Activated T-helper 1 cell treated with anti-CD3 and anti-CD28 coated beads, Interleukin-12 subunit alpha, Interleukin-12 subunit beta, Interleukin-2, Interleukin-4 antibody, amounts not matched to agents 30 ng/mL and 10 ng/mL and 1 ng/mL, durations not matched to agents 14 hours and 24 hours and 36 hours (primary cell): ENCODE measurements at regions of chr17 and their contacts with region 1.

Region 1: DNA sequence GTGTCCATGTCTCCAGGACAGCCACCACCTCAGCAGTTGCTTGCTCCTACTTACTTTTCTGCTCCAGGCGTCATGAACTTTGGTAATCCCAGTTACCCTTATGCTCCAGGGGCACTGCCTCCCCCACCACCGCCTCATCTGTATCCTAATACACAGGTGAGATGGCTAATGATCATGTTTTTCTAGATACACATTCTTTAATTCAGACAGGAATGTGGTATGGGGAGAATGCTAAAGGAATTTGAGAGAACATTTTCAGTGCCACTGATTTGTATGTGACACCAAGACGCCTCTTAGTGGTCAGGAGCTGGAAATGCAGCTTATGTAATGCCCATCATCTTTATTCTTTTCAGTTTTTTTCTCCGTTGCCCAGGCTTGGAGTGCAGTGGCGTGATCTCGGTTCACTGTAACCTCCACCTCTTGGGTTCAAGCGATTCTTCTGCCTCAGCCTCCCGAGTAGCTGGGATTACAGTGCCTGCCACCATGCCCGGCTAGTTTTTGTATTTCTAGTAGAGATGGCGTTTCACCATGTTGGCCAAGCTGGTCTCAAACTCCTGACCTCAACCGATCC is 8.9 kb upstream of the RAPGEFL1 start:
- DNase-seq: no peak
- H3K4me3 Mint-ChIP-seq: no peak overlapping the region
- H3K27ac Mint-ChIP-seq: peak overlapping the region; percentile 7
- H3K4me1 Mint-ChIP-seq: peaks cover 10% of the 10 kb centered on the region
- H3K27me3 Mint-ChIP-seq: no peaks in the 10 kb centered on the region

Region 2: GRCh38 chr17:39861235-39861634 is 307.1 kb before region 1 on chr17:
- intact Hi-C with region 1: no loop called
- DNase-seq: no peak
- H3K4me3 Mint-ChIP-seq: peak overlapping the region; percentile 75
- H3K27ac Mint-ChIP-seq: peak overlapping the region; percentile 57
- H3K4me1 Mint-ChIP-seq: peaks cover 46% of the 10 kb centered on the region
- H3K27me3 Mint-ChIP-seq: no peaks in the 10 kb centered on the region

Region 3: DNA sequence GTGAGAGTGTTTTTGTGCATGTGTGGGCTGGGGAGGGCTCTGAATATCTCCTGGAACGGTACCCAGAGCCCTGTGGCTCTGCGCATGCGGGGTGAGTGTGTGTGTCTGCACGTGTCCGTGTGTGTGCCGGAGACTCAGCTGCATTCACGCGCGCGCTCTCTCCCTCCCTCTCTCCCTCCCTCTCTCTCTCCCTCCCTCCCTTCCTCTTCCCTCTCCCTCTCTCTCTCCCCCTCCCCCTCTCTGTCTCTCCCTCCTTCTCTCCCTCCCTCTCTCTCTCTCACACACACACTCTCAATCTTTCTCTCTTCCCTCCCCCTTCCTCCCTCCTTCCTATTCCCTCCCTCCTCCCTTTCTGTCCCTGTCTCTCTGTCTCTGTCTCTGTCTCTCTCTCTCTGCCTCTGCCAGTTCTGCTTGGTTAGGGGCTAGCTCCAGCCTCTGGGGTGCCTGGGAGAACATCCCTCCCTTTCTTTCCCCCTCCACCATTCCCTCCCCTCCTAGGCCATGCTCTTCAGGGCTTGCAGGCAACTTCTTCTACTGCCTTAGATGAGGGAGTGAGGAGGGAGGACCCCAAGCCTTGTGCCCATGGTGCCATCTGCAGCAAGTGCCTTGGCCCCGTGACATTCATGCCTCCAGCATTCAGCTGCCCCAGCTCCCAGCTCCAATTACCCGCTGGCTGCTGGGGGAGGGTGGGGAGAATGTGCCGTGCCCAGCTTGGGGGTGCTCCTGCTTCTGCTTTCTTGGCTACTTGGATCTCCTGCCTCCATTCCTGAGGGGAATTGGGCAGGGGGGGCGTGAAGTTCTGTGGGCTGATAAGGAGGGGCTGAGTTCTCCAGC is 99.2 kb before region 1 on chr17:
- intact Hi-C with region 1: loop called (anchors 5 kb)
- DNase-seq: peak; percentile 55
- H3K4me3 Mint-ChIP-seq: peak overlapping the region; percentile 77
- H3K27ac Mint-ChIP-seq: peak overlapping the region; percentile 79
- H3K4me1 Mint-ChIP-seq: peaks cover 44% of the 10 kb centered on the region
- H3K27me3 Mint-ChIP-seq: peaks cover 17% of the 10 kb centered on the region

Region 4: DNA sequence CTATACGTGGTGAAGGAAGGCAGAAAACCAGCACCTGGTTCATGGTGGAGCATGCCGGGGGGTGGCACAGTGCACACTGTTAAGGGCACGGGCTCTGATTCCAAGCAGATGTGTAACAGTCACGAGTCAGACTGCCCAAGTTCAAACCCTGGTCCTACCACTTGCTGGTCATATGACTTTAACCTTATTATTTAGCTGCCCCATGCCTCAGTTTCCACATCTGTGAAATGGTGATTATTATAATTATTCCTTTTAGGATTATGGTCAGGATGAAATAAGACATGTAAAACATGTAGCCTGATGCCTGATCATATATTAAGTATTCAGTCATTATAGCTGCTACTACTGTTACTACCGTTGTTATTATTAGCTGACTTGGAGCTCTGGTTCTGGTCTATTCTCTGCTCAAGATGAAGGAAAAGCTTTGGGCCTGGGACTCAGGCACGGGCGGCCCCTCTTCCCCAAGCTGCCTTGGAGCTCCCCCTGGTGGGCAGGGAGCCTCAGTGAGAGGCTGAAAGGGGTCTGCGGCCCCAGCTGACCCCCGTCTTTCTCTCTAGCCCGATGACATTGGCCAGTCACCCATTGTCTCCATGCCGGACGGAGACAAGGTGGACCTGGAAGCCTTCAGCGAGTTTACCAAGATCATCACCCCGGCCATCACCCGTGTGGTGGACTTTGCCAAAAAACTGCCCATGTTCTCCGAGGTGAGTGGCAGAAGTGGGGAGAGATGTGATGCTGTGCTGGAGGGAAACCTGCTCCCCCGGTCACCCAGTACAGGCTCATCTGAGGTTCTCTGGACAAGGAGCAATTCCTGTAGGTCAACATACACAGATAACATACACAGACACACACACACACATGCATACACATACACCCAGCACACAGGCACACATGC is 82.0 kb before region 1 on chr17:
- intact Hi-C with region 1: no loop called
- DNase-seq: no peak
- H3K4me3 Mint-ChIP-seq: no peak overlapping the region
- H3K27ac Mint-ChIP-seq: no peak overlapping the region
- H3K4me1 Mint-ChIP-seq: no peaks in the 10 kb centered on the region
- H3K27me3 Mint-ChIP-seq: no peaks in the 10 kb centered on the region

Region 5: DNA sequence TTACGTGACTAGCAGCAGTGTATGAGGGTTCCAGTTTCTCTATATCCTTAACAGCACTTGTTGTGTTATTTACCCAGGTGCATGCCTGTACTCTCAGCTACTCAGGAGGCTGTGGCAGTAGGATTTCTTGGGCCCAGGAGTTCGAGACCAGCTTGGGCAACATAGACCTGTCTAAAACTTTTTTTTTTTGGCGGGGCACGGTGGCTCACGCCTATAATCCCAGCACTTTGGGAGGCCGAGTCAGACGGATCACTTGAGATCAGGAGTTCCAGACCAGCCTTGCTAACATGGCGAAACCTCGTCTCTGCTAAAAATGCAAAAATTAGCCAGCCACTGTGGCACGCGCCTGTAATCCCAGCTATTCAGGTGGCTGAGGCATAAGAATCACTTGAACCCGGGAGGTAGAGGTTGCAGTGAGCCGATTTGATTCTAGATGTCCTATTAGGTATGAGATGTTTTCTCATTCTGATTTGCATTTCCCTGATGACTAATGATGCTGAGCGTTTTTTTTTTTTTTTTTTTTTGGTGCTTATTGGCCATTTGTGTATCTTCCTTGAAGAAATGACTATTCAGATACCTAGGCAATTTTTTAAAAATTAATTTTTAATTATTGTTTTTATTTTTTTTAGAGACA is 14.6 kb before region 1 on chr17:
- intact Hi-C with region 1: no loop called
- DNase-seq: no peak
- H3K4me3 Mint-ChIP-seq: no peak overlapping the region
- H3K27ac Mint-ChIP-seq: peak overlapping the region; percentile 98
- H3K4me1 Mint-ChIP-seq: peaks cover 51% of the 10 kb centered on the region
- H3K27me3 Mint-ChIP-seq: no peaks in the 10 kb centered on the region